Panc1 (cell line): ENCODE measurements at regions of chr6 and their contacts with region 1.

Region 1: GRCh38 chr6:44851176-44851575 is 463.7 kb downstream of the CDC5L start:
- DNase-seq: no peak
- ATAC-seq: no peak
- H3K4me3 ChIP-seq: no peak overlapping the region
- H3K27ac ChIP-seq: no peak overlapping the region
- H3K4me1 ChIP-seq: no peaks in the 10 kb centered on the region
- H3K27me3 ChIP-seq: no peaks in the 10 kb centered on the region
- CTCF ChIP-seq: no peak

Region 2: DNA sequence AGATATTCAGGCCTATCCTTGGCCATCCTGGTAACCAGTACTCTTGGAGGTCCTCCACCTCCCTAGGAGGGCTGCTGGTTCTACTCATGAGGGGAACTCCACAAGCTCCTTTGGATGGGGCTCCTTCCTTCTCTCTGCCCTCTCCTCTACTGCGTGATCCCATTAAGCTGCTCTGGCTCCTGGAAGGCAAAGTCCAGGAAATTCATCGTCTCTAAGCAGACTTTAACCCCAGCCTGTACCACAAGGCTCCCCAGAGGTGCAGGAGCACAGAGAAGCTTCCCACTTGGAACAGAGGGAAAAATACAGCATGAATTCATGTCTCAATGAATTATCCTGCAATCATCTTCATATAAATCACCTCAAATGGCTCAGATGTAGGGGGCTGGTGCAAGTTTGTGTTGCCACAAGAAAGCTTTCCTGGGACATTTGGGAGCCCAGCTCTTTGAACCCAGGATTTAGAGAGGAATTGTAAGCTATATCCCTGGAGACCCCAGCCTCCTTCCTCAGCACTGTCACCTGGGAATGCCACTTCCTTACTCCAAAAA is 108.3 kb before region 1 on chr6:
- CTCF ChIA-PET with region 1: no interaction called
- POLR2A ChIA-PET with region 1: no interaction called
- in situ Hi-C with region 1: no loop called
- intact Hi-C with region 1: no loop called
- DNase-seq: no peak
- ATAC-seq: no peak
- H3K4me3 ChIP-seq: no peak overlapping the region
- H3K27ac ChIP-seq: no peak overlapping the region
- H3K4me1 ChIP-seq: no peaks in the 10 kb centered on the region; the same call in 1 of the 2 replicates
- H3K27me3 ChIP-seq: 0 out of 2 replicates have a peak, but pooled peaks cover 2% of the 10 kb centered on the region
- CTCF ChIP-seq: no peak

Region 3: DNA sequence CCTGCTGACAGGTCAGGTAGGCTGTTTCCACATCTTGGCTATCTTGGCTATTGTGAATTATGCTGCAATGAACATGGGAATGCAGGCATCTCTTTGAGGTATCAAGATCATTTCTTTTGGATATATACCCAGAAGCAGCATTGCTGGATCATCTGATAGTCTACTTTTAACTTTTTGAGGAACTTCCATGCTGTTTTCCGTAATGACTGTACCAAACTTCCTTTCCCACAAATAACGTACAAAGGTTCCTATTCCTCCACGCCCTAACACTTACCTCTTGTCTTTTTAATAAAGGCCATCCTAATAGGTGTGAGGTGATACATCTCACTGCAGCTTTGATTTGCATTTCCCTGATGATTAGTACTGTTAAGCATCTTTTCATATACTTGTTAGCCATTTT is 138.2 kb after region 1 on chr6:
- CTCF ChIA-PET with region 1: no interaction called
- POLR2A ChIA-PET with region 1: interaction called, 10 read pairs
- in situ Hi-C with region 1: no loop called
- intact Hi-C with region 1: no loop called
- DNase-seq: no peak
- ATAC-seq: no peak
- H3K4me3 ChIP-seq: no peak overlapping the region
- H3K27ac ChIP-seq: no peak overlapping the region
- H3K4me1 ChIP-seq: no peaks in the 10 kb centered on the region
- H3K27me3 ChIP-seq: no peaks in the 10 kb centered on the region
- CTCF ChIP-seq: no peak

Region 4: DNA sequence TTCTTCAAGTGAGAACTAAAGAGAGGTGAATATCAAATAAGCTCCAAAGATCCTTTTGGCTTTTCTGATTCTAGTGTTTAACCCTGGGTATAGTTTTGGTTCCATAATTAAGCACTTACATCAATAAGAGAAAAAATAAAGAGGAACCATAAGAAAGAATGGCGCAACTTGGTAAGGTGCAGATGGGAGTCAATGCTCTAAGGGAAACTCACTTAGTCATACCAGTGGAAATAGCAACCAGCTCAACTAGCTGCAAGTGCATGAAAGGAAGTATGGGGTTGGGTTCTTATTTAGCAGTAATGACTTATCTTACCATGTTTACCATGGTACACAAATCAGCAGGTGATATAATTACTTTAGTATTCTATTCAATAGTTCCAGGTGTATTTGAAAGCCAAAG is 180.4 kb after region 1 on chr6:
- CTCF ChIA-PET with region 1: no interaction called
- POLR2A ChIA-PET with region 1: no interaction called
- in situ Hi-C with region 1: no loop called
- intact Hi-C with region 1: no loop called
- DNase-seq: no peak
- ATAC-seq: no peak
- H3K4me3 ChIP-seq: no peak overlapping the region
- H3K27ac ChIP-seq: no peak overlapping the region
- H3K4me1 ChIP-seq: no peaks in the 10 kb centered on the region
- H3K27me3 ChIP-seq: no peaks in the 10 kb centered on the region
- CTCF ChIP-seq: no peak